ENCODE measurements at regions of chr16 and their contacts with region 1.

Region 1: DNA sequence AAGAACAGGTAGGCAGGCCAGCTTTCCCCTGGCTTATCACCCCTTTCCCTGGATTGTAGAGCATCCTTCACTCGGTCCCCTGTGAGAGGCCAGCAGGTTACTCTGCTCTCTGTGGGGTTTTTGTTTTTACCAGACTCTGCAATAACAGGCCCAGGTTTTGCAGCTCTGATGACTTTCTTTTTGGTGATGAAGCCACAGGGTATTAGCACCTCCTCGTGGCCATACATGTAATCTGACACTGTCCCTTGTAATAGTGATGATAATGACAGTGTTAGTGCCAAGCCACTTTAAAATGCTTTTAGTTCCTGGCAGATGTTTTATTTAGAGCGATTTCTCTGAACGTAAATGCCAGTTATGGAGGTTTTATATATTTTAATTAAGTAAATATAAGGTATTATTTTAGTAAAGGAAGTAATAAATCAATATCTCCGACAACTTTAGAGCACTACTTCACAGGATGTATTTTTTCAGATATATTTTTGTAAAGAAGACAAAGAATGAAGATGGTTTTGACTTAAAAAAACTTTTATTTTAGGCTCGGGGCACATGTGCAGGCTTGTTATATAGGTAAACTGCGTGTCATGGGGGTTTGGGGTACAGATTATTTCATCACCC is 38.0 kb upstream of the CPHXL start:
- DNase-seq: peak; percentile 60
- ATAC-seq: peak; percentile 98
- H3K4me3 ChIP-seq: no peak overlapping the region
- H3K27ac ChIP-seq: no peak overlapping the region
- H3K4me1 ChIP-seq: no peaks in the 10 kb centered on the region
- H3K27me3 ChIP-seq: peaks cover 24% of the 10 kb centered on the region
- CTCF ChIP-seq: peak; percentile 82 to 84 (median 84); a peak in 5 of 6 replicates
- POLR2A ChIP-seq: no peak
- RAD21 ChIP-seq: peak; percentile 92

Region 2: DNA sequence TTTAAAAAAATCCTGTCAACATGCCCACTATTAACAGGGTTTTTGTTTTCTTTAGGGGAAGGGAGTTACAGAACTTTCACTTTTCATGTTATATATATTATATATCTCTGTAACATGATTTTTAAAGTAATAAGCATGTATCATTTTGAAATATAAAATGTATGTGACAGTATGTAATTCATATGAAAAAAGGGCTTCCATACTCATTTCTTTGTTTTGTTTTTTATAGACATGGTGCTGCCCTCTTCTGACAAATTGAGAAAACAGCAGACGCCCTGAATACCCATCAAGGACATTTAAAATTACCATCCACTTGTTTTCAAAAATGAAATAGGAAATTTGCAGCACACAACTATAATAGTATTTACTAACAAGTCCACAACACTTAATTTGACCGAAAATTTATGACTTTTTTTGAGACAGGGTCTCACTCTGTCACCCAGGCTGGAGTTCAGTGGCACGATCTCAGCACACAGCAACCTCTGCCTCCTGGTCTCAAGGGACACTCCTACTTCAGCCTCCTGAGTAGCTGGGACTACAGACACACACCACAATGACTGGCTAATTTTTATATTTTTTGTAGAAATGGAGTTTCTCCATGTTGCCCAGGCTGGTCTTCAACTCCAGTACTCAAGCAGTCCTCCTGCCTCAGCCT is 361.3 kb before region 1 on chr16:
- CTCF ChIA-PET with region 1: no interaction called
- POLR2A ChIA-PET with region 1: no interaction called
- RAD21 ChIA-PET with region 1: no interaction called
- intact Hi-C with region 1: loop called (anchors 5 kb)
- DNase-seq: peak; percentile 10
- ATAC-seq: peak; percentile 67
- H3K4me3 ChIP-seq: no peak overlapping the region
- H3K27ac ChIP-seq: no peak overlapping the region
- H3K4me1 ChIP-seq: peaks cover 0 to 7% of the 10 kb centered on the region in 2 experiments; a peak in 1 of 4 replicates
- H3K27me3 ChIP-seq: no peaks in the 10 kb centered on the region
- CTCF ChIP-seq: peak; percentile 49 to 67 (median 65); a peak in 5 of 6 replicates
- POLR2A ChIP-seq: no peak
- RAD21 ChIP-seq: peak; percentile 69

Region 3: GRCh38 chr16:75647492-75648264 is 116.6 kb before region 1 on chr16 and contains the starts of genes KARS1 and TERF2IP:
- CTCF ChIA-PET with region 1: interaction called, 5 read pairs
- POLR2A ChIA-PET with region 1: no interaction called
- RAD21 ChIA-PET with region 1: interaction called, 4 to 8 read pairs
- intact Hi-C with region 1: loop called (anchors 1 kb)
- DNase-seq: peak; percentile 82
- ATAC-seq: peak; percentile 94
- H3K4me3 ChIP-seq: peak within 1 kb of the TSS; percentile 90 to 94
- H3K27ac ChIP-seq: peak within 1 kb of the TSS; percentile 89
- H3K4me1 ChIP-seq: peaks cover 8 to 28% of the 10 kb centered on the region in 2 experiments
- H3K27me3 ChIP-seq: no peaks in the 10 kb centered on the region
- CTCF ChIP-seq: no peak
- POLR2A ChIP-seq: peak; percentile 93
- RAD21 ChIP-seq: no peak
- total RNA-seq, gene KARS1: 196 TPM
- total RNA-seq, gene TERF2IP: 36.4 TPM

Measured in HCT116 (cell line).